ENCODE measurements at regions of chr16 and their contacts with region 1.

Region 1: GRCh38 chr16:72989579-72990551 is 58.1 kb downstream of the ZFHX3 start:
- DNase-seq: peak in 1 of 5 donors; percentile 39
- H3K4me3 ChIP-seq: no peak overlapping the region
- H3K27ac ChIP-seq: no peak overlapping the region
- H3K4me1 ChIP-seq: peaks cover 9% of the 10 kb centered on the region
- H3K27me3 ChIP-seq: no peaks in the 10 kb centered on the region
- CTCF ChIP-seq: no peak
- EP300 ChIP-seq: no peak
- POLR2A ChIP-seq: no peak

Region 2: GRCh38 chr16:72947379-72948237 is 42.3 kb before region 1 on chr16:
- intact Hi-C with region 1: loop called in 1 of 4 experiments (anchors 2 kb)
- DNase-seq: no peak
- H3K4me3 ChIP-seq: no peak overlapping the region
- H3K27ac ChIP-seq: no peak overlapping the region
- H3K4me1 ChIP-seq: peaks cover 2% of the 10 kb centered on the region
- H3K27me3 ChIP-seq: no peaks in the 10 kb centered on the region
- CTCF ChIP-seq: no peak
- EP300 ChIP-seq: no peak
- POLR2A ChIP-seq: no peak

Region 3: GRCh38 chr16:73095885-73096421 is 106.1 kb after region 1 on chr16:
- intact Hi-C with region 1: no loop called
- DNase-seq: no peak
- H3K4me3 ChIP-seq: no peak overlapping the region
- H3K27ac ChIP-seq: no peak overlapping the region
- H3K4me1 ChIP-seq: no peaks in the 10 kb centered on the region
- H3K27me3 ChIP-seq: no peaks in the 10 kb centered on the region
- CTCF ChIP-seq: no peak
- EP300 ChIP-seq: no peak
- POLR2A ChIP-seq: no peak